GM18951 (cell line): ENCODE measurements at regions of chr17 and their contacts with region 1.

Region 1: GRCh38 chr17:81722184-81723120 is 10.4 kb downstream of the SLC25A10 start:
- POLR2A ChIP-seq: no peak

Region 2: DNA sequence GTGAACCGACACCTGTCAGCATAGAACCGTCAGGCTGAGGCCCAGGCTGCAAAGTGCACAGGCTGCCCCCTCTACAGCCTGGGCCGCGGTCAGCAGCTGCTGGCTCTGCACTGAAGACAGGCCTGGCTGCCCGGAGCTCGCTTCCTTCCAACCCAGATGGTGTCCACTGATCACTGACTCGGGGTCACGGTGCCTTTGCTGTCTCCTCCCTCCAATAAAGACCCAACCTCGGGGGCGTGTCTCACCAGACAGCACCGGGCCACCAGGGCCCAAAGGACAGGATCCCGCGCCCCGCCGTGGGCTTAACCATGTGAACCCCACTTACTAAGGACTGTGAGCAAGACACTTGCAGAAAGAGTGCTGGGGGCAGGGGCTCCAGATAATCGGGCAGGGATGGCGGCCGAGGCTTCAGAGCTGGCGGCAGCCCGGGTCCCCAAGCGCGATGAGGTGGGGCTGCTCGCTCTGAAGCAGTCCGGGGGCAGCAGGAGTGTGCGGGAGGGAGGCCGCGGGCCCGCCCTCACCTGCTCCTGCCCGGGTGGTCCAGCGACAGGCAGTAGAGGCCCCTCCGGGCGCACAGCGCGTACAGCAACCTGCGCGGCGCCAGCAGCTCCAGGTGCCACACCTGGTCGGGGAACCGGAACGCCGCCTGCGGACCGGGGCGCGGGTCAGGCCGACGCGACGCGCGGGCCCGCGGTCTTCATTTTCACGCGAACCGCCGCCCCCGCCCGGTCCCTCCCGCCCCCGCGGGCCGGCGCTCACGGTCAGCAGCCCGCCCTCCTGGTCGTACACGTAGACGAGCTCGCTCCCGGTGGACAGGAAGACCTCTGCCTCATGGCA is 170.8 kb before region 1 on chr17:
- in situ Hi-C with region 1: no loop called
- POLR2A ChIP-seq: no peak

Region 3: DNA sequence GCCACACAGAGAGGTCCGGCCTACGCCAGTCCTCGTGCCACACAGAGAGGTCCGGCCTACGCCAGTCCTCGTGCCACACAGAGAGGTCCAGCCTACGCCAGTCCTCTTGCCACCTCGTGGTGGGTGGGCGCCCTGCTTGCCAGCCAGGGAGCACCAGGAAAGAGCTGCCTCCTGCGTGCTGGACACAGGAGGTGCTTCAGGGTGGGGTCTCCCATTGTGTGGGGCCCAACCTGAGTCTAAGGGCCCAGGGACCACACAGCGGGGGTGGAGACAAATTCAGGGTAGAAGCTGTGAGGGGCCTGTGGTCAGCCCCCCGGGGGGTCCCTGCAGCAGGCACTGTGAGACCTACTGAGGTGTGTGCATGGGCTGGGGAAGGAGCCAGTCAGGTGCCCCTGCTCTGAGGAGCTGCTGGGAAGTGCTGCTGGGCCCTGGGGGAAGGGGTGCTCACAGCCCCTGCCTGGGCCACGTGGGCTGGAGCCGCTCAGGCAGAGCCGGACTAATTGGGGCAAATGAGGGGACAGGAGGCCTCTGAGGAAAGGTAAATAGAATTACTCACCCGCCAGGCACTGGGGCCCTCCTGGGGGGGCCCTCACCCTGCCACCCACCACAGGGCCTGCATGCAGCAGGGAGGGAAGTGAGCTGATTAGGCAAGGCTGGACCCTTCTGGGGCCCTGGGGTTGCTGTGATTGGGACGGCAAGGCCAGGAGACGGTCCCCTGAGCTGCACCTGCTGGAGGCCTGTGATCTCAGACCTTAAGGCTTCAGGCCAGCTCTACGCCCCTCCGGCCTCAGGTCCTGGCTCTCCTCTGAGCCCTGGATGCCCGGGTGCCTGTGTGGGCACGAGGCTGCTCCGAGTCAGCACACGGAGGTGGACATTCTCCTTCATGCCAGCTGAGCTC is 92.5 kb after region 1 on chr17:
- in situ Hi-C with region 1: loop called (anchors 5 kb)
- POLR2A ChIP-seq: no peak